A673 (cell line): ENCODE measurements at regions of chr10 and their contacts with region 1.

Region 1: DNA sequence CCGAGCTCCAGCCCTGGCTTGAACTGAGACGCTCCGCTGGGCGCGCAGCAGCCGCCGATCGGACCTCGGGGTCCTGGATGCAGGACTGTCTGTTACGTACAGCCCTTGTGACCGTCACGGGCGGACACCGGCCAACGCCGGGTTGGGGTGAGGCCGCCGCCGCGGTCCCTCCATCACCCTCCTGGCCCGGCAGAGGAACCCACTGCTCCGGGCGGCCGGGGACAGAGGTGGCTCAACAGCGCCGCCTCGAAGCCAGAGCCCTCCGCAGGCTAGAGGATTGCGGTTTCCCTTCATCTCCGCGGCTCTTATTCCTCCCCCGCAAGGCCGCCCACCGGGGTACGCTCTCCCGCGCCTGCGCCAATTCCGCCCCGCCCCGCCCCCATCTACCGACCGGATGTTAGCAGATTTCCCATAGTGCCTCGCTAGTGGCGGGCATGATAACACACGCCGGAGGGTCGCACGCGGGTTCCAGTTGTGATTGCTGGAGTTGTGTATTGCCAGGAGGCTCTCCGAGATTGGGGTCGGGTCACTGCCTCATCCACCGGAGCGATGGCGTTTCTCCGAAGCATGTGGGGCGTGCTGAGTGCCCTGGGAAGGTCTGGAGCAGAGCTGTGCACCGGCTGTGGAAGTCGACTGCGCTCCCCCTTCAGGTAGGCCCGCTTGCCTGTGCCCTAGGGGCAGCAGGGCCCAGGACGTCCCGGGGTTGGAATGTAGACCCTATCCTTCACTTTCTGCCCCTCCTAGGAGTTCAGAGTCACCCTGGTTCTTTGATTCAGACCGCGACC is at the start of gene TFAM:
- DNase-seq: peak; percentile 96
- H3K4me3 ChIP-seq: peak within 1 kb of the TSS; percentile 80
- H3K27ac ChIP-seq: peak within 1 kb of the TSS; percentile 84
- H3K4me1 ChIP-seq: peaks cover 7% of the 10 kb centered on the region
- H3K27me3 ChIP-seq: no peaks in the 10 kb centered on the region
- CTCF ChIP-seq: peak; percentile 85
- total RNA-seq, gene TFAM: 99.1 and 113 TPM in 2 replicates

Region 2: GRCh38 chr10:58177362-58177947 is 207.7 kb before region 1 on chr10:
- CTCF ChIA-PET with region 1: no interaction called
- POLR2A ChIA-PET with region 1: no interaction called
- intact Hi-C with region 1: loop called (anchors 2 kb)
- DNase-seq: peak; percentile 46
- H3K4me3 ChIP-seq: no peak overlapping the region
- H3K27ac ChIP-seq: no peak overlapping the region
- H3K4me1 ChIP-seq: no peaks in the 10 kb centered on the region
- H3K27me3 ChIP-seq: no peaks in the 10 kb centered on the region
- CTCF ChIP-seq: peak; percentile 65

Region 3: GRCh38 chr10:58237014-58237830 is 148.0 kb before region 1 on chr10:
- CTCF ChIA-PET with region 1: no interaction called
- POLR2A ChIA-PET with region 1: no interaction called
- intact Hi-C with region 1: no loop called
- DNase-seq: peak; percentile 15
- H3K4me3 ChIP-seq: no peak overlapping the region
- H3K27ac ChIP-seq: no peak overlapping the region
- H3K4me1 ChIP-seq: no peaks in the 10 kb centered on the region
- H3K27me3 ChIP-seq: no peaks in the 10 kb centered on the region
- CTCF ChIP-seq: no peak

Region 4: GRCh38 chr10:58299580-58299979 is 85.6 kb before region 1 on chr10:
- CTCF ChIA-PET with region 1: interaction called, 3 read pairs
- POLR2A ChIA-PET with region 1: no interaction called
- intact Hi-C with region 1: loop called (anchors 1 kb)
- DNase-seq: peak; percentile 73
- H3K4me3 ChIP-seq: no peak overlapping the region
- H3K27ac ChIP-seq: no peak overlapping the region
- H3K4me1 ChIP-seq: no peaks in the 10 kb centered on the region
- H3K27me3 ChIP-seq: peaks cover 5% of the 10 kb centered on the region
- CTCF ChIP-seq: peak; percentile 93

Region 5: DNA sequence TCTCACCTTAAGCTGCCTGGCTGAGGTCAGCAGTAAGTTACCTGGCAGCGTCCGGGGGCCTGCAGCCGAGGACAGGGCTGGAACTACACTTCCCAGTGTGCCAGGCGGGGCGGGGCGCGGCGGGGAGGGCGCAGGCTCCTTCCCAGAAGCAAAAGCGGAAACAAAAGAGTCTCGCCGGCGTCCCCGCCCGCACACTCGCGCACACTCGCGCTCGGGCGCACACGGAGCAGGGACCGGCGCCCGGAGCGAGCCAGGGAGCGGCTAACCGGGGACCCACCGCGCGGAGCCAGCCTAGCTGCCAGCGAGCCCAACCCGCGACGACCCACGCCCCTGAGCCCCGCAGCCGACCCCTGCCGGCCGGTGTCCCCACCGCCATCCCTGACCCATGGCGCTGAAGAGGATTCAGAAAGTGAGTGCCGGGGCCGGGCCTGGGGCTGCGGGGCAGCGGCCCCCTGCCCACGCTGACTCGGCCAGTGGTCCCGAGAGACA is 50.3 kb before region 1 on chr10 and contains the start of gene UBE2D1:
- CTCF ChIA-PET with region 1: no interaction called
- POLR2A ChIA-PET with region 1: no interaction called
- intact Hi-C with region 1: loop called (anchors 5 kb)
- DNase-seq: peak; percentile 88
- H3K4me3 ChIP-seq: peak within 1 kb of the TSS; percentile 100
- H3K27ac ChIP-seq: peak within 1 kb of the TSS; percentile 87
- H3K4me1 ChIP-seq: peaks cover 10% of the 10 kb centered on the region
- H3K27me3 ChIP-seq: no peaks in the 10 kb centered on the region
- CTCF ChIP-seq: no peak
- total RNA-seq, gene UBE2D1: 16.9 and 18.6 TPM in 2 replicates

Region 6: DNA sequence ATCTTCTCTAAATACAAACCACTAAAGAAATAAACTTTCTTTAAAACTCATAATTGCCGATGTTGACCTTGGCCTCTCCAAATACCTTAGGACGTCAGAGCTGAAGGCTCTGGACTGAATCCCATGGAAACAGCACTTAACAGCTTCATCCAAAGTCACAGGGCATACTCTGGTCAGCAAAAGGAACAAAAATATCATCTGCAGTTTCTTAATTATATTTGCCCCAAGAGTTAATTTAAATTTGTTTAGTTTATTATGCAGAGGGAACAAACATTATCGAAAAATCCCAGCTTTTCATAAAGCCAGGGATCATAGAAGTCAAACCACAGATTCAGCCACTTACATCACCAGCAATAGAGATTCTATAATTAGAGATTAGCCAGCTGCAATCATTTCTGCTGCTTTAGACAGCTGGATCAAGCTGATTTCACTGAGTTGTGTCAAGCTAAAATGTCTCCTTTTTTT is 997.7 kb after region 1 on chr10:
- CTCF ChIA-PET with region 1: no interaction called
- POLR2A ChIA-PET with region 1: no interaction called
- intact Hi-C with region 1: no loop called
- DNase-seq: no peak
- H3K4me3 ChIP-seq: no peak overlapping the region
- H3K27ac ChIP-seq: no peak overlapping the region
- H3K4me1 ChIP-seq: peaks cover 8% of the 10 kb centered on the region
- H3K27me3 ChIP-seq: no peaks in the 10 kb centered on the region
- CTCF ChIP-seq: no peak